ENCODE measurements at regions of chr9 and their contacts with region 1.

Region 1: GRCh38 chr9:128818099-128818838 is at the start of gene ENDOG:
- DNase-seq: peak; percentile 93
- ATAC-seq: peak; percentile 97
- H3K4me3 ChIP-seq: peak within 1 kb of the TSS; percentile 59
- H3K27ac ChIP-seq: peak within 1 kb of the TSS; percentile 58
- H3K4me1 ChIP-seq: peaks cover 4% of the 10 kb centered on the region; the same call in 1 of the 2 replicates
- H3K27me3 ChIP-seq: no peaks in the 10 kb centered on the region
- CTCF ChIP-seq: peak; percentile 99
- POLR2A ChIP-seq: peak; percentile 85
- RAD21 ChIP-seq: peak; percentile 53
- total RNA-seq, gene ENDOG: 9.9 and 11.7 TPM in 2 replicates

Region 2: GRCh38 chr9:128828719-128829452 is 10.6 kb after region 1 on chr9:
- CTCF ChIA-PET with region 1: interaction called, 11 read pairs
- POLR2A ChIA-PET with region 1: interaction called, 3 read pairs
- dilution Hi-C with region 1: no loop called
- in situ Hi-C with region 1: no loop called
- intact Hi-C with region 1: no loop called
- DNase-seq: no peak
- ATAC-seq: no peak; the same call in 1 of the 2 replicates
- H3K4me3 ChIP-seq: peak overlapping the region; percentile 80
- H3K27ac ChIP-seq: peak overlapping the region; percentile 73
- H3K4me1 ChIP-seq: peaks cover 5% of the 10 kb centered on the region; the same call in 1 of the 2 replicates
- H3K27me3 ChIP-seq: no peaks in the 10 kb centered on the region
- CTCF ChIP-seq: no peak
- POLR2A ChIP-seq: no peak
- RAD21 ChIP-seq: no peak

Region 3: DNA sequence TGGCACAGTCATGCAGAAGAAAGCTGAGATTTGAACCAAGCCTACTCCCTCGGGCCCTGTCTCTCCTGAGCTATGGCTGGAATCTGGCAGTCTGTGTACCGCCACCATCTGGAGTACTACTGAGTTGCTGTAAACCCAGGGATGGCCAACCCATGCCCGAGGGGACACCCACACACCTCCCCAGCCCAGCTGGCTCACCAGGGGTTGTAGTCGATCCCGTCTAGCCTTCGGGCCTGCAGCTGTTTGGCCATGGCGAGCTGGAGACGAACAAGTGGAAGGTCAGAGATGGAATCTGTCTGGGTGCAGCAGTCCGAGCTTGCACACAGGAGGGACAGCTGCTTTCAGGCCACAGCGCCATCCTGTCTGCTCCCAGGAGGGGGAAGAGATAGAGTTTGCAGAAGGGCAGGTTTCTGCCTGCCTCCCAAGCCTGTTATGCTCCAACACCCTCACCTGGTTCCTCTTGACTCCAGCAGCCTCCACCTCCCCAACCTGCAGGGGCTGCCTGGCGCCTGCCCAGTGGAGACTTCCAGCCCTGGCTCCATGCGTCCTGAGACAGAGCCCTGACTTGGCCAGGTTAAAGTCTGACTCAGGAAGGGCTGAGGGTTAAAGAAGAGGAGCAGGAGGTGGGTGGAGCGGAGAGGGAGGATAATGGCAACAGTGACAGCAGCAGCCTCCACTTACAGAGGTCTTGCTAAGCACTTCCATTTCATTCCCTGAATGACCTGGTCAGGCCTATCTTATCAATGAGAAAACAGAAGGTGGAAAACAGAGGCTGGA is 27.1 kb after region 1 on chr9:
- CTCF ChIA-PET with region 1: no interaction called
- POLR2A ChIA-PET with region 1: interaction called, 16 read pairs
- dilution Hi-C with region 1: no loop called
- in situ Hi-C with region 1: no loop called
- intact Hi-C with region 1: no loop called
- DNase-seq: no peak
- ATAC-seq: peak; percentile 82
- H3K4me3 ChIP-seq: no peak overlapping the region
- H3K27ac ChIP-seq: no peak overlapping the region
- H3K4me1 ChIP-seq: no peaks in the 10 kb centered on the region
- H3K27me3 ChIP-seq: no peaks in the 10 kb centered on the region
- CTCF ChIP-seq: 0 out of 2 replicates have a peak, but pooled peaks have one; percentile 3
- POLR2A ChIP-seq: no peak
- RAD21 ChIP-seq: no peak